Activated CD4-positive, alpha-beta T cell treated with anti-CD3 and anti-CD28 coated beads, Interleukin-2, amount 10 ng/mL, durations not matched to agents 24 days and 14 days (primary cell): ENCODE measurements at regions of chr7 and their contacts with region 1.

Region 1: GRCh38 chr7:44999245-45000095 is 531 bp upstream of the CCM2 start:
- DNase-seq: peak; percentile 100
- H3K4me3 Mint-ChIP-seq: peak overlapping the region; percentile 87
- H3K27ac Mint-ChIP-seq: peak overlapping the region; percentile 97
- H3K4me1 Mint-ChIP-seq: peaks cover 53% of the 10 kb centered on the region
- H3K27me3 Mint-ChIP-seq: peaks cover 3% of the 10 kb centered on the region

Region 2: DNA sequence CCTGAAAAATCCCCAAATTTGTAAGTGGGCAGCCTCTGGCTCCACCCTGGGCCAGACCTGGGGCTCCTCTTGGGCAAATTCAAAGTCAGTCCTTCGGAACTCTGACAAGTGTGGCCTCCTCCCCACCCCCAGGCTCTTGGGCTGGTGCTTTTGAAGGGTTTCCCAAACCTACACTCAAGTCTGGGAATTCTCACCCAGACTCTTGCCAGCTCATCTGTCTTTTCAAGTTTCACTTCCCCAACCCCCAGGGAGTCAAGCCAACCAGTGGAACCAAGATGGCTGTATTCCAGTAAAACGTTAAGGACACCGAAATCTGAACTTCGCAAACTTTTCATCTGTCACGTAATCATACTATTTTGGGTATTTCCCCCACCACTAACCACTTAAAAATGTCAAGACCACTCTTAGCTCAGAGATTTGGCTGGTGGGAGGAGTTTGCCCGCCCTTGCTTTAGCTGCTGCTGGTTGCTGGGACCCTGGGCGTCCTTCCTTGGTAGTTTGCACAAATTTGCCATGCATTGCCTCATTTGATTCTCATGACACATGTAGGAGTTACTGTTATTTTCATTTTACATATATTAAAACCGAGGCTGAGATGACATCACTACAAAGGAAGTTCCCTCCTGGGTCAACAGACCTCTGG is 19.0 kb before region 1 on chr7:
- intact Hi-C with region 1: loop called (anchors 1 kb)
- DNase-seq: peak; percentile 89
- H3K4me3 Mint-ChIP-seq: peak overlapping the region; percentile 93
- H3K27ac Mint-ChIP-seq: peak overlapping the region; percentile 90
- H3K4me1 Mint-ChIP-seq: peaks cover 63% of the 10 kb centered on the region
- H3K27me3 Mint-ChIP-seq: no peaks in the 10 kb centered on the region

Region 3: DNA sequence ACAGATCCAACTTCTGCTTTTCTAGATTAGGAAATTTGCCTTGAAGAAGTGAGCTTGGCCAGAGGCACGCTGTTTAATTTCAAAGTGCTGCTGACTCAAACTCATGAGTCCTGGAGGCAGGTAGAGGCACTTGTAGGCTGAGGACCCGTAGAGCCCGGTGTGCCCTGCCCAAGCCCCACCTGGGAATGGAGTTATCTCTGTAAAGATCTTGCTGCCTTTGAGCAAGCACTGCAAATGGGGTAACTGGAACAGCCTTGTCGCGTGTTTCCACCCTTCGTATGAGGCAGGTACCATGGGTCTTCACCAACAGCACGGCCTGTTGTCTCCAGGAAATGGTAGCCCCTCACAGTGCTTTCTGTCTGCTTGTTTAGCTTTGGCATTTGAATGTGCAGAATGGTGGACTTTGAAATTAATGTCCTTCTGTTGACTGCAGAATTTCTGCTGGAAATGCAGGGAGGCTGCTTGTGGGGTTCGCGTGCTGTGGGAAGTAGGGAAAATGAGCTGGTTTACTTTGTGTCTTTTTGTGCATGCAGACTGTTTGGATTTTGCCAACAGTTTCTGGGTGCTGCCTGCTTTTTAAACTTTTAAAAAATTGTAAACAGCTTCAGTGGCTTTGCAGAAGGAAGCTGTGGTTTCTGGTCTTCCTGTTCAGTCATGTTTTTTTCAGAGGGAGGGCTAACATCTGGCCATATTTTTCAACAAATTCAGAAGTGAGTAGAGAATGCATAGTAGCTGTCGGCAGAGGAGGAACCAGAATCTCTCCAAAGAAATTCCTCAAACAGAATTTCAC is 27.7 kb after region 1 on chr7:
- intact Hi-C with region 1: loop called (anchors 1 kb)
- DNase-seq: peak; percentile 84
- H3K4me3 Mint-ChIP-seq: peak overlapping the region; percentile 85
- H3K27ac Mint-ChIP-seq: peak overlapping the region; percentile 85
- H3K4me1 Mint-ChIP-seq: peaks cover 68% of the 10 kb centered on the region
- H3K27me3 Mint-ChIP-seq: no peaks in the 10 kb centered on the region

Region 4: GRCh38 chr7:45061806-45062425 is 62.4 kb after region 1 on chr7:
- intact Hi-C with region 1: loop called (anchors 2 kb)
- DNase-seq: no peak
- H3K4me3 Mint-ChIP-seq: no peak overlapping the region
- H3K27ac Mint-ChIP-seq: peak overlapping the region; percentile 66
- H3K4me1 Mint-ChIP-seq: peaks cover 42% of the 10 kb centered on the region
- H3K27me3 Mint-ChIP-seq: no peaks in the 10 kb centered on the region